H1 (cell line): ENCODE measurements at regions of chr1 and their contacts with region 1.

Region 1: DNA sequence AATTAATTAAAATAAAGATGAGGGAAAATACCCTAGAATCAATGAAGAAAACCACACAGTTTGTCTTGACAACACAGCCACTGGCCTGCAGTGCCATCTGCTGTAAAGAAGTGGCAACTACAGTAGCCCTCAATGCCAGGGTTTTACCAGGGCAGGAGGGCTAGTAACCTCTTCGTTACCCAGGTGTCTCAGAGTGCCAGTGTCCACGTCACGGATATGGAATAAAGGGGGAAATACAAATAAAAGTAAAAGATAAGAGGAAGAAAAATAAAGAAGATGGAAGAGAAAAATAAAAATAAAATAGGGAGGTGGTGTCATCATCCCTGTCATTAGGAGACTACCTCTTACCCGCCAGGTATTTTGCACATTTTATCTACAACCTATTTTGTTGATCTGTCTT is 14.2 kb upstream of the SLC44A3 start:
- DNase-seq: peak in 1 of 2 experiments; percentile 75
- H3K4me3 ChIP-seq: no peak overlapping the region
- H3K27ac ChIP-seq: no peak overlapping the region
- H3K4me1 ChIP-seq: peaks cover 0 to 10% (median 3%) of the 10 kb centered on the region in 4 experiments; a peak in 4 of 7 replicates
- H3K27me3 ChIP-seq: no peaks in the 10 kb centered on the region
- CTCF ChIP-seq: peak; percentile 76 to 88 (median 84)
- EP300 ChIP-seq: no peak
- POLR2A ChIP-seq: no peak
- RAD21 ChIP-seq: peak; percentile 98 to 99

Region 2: GRCh38 chr1:94471271-94471670 is 334.6 kb before region 1 on chr1:
- CTCF ChIA-PET with region 1: interaction called, 13 read pairs
- POLR2A ChIA-PET with region 1: no interaction called
- DNase-seq: no peak
- H3K4me3 ChIP-seq: no peak overlapping the region
- H3K27ac ChIP-seq: no peak overlapping the region
- H3K4me1 ChIP-seq: peaks cover 0 to 2% (median 0%) of the 10 kb centered on the region in 4 experiments; a peak in 1 of 7 replicates
- H3K27me3 ChIP-seq: no peaks in the 10 kb centered on the region
- CTCF ChIP-seq: no peak
- EP300 ChIP-seq: no peak
- POLR2A ChIP-seq: no peak
- RAD21 ChIP-seq: no peak

Region 3: GRCh38 chr1:94486990-94487389 is 318.9 kb before region 1 on chr1:
- CTCF ChIA-PET with region 1: interaction called, 29 read pairs
- POLR2A ChIA-PET with region 1: no interaction called
- DNase-seq: no peak
- H3K4me3 ChIP-seq: no peak overlapping the region
- H3K27ac ChIP-seq: no peak overlapping the region
- H3K4me1 ChIP-seq: no peaks in the 10 kb centered on the region
- H3K27me3 ChIP-seq: no peaks in the 10 kb centered on the region
- CTCF ChIP-seq: no peak
- EP300 ChIP-seq: no peak
- POLR2A ChIP-seq: no peak
- RAD21 ChIP-seq: no peak

Region 4: GRCh38 chr1:94522304-94522703 is 283.6 kb before region 1 on chr1:
- CTCF ChIA-PET with region 1: interaction called, 212 read pairs
- POLR2A ChIA-PET with region 1: interaction called, 3 read pairs
- DNase-seq: no peak
- H3K4me3 ChIP-seq: no peak overlapping the region
- H3K27ac ChIP-seq: no peak overlapping the region
- H3K4me1 ChIP-seq: peaks cover 0 to 2% (median 0%) of the 10 kb centered on the region in 4 experiments; a peak in 1 of 7 replicates
- H3K27me3 ChIP-seq: no peaks in the 10 kb centered on the region
- CTCF ChIP-seq: peak in 2 of 3 experiments; percentile 45 to 50; a peak in 2 of 4 replicates
- EP300 ChIP-seq: no peak
- POLR2A ChIP-seq: no peak
- RAD21 ChIP-seq: peak; percentile 84 to 85

Region 5: DNA sequence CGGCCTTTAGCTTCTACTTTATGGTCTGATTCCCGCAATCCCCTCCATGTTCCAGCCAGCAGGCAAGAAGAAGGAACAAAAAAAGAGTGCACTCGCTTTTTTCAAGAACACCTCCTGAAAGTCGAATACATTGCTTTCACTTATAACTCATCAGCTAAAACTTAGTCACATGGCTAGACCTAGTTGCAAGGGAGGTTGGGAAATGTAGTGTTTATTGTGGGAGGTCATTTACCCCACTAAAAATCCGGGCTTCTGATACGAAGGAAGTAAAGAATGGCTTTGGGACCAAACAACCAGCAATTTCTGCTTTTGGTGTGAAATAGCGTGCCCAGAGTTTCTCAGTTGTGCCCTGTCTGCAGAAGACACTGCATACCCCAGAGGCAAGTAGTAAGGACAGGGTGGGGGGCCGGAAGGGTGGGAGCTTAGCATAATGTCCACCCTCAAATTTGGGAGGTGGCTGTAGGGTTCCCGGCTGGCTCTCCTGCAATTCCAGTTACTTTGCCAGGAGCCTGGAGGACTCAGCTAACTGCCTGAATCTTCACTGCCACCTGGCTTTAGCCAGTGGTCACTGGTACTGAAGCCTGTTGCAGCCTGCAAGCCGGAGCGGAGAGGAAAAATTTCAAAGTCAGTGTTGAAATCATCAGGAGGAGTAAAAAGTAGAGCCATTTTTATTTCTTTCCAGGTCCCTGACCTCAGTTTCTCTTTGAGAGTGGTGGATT is 206.7 kb before region 1 on chr1:
- CTCF ChIA-PET with region 1: interaction called, 148 read pairs
- POLR2A ChIA-PET with region 1: no interaction called
- DNase-seq: peak in 1 of 2 experiments; percentile 54
- H3K4me3 ChIP-seq: no peak overlapping the region
- H3K27ac ChIP-seq: no peak overlapping the region
- H3K4me1 ChIP-seq: no peaks in the 10 kb centered on the region
- H3K27me3 ChIP-seq: no peaks in the 10 kb centered on the region; a peak in 1 of 7 replicates
- CTCF ChIP-seq: peak; percentile 67 to 78 (median 69)
- EP300 ChIP-seq: no peak
- POLR2A ChIP-seq: no peak
- RAD21 ChIP-seq: peak; percentile 79 to 84

Region 6: DNA sequence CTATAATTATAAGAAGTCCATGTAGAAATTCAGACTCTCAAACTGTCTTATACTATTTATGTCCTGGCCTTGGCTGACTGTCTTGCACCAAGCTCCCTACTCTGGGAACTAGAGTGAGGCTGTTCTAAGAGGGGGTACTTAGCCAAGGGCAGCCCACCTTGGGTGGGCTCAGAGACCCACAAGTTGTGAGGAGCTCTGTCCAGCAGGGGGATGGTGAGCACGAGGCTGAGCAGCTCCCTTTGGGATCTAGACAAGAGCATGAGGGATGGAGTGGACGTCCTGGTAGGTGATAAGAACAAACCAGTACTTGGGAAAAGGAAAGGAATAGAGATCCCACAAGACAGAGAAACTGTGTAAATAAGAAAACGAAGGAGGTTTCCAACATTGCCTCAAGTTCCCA is 112.9 kb before region 1 on chr1:
- CTCF ChIA-PET with region 1: interaction called, 16 read pairs
- POLR2A ChIA-PET with region 1: no interaction called
- DNase-seq: peak in 1 of 2 experiments; percentile 59
- H3K4me3 ChIP-seq: no peak overlapping the region
- H3K27ac ChIP-seq: no peak overlapping the region
- H3K4me1 ChIP-seq: peaks cover 0 to 21% (median 6%) of the 10 kb centered on the region in 4 experiments; a peak in 6 of 7 replicates
- H3K27me3 ChIP-seq: no peaks in the 10 kb centered on the region
- CTCF ChIP-seq: peak; percentile 62 to 77 (median 75)
- EP300 ChIP-seq: no peak
- POLR2A ChIP-seq: no peak
- RAD21 ChIP-seq: peak; percentile 51 to 69

Region 7: DNA sequence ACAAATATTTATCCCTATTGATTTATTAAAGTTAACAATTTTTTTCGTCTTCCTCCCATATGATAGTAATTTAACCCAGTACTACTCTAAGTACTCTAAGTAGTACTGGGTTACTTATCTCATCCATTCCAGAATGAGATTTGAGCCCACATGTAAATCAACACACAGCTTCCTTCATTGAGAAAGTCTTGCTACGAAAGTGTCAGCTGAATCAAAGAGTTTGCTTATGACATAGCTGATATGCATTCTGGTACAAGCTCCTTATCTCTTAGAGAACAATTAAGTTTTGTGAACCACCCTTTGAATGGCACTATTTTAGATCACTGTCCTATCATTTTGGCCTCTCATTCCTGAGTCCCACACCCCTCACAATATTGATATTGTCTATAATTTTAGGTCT is 11.8 kb after region 1 on chr1:
- CTCF ChIA-PET with region 1: interaction called, 20 read pairs
- POLR2A ChIA-PET with region 1: no interaction called
- DNase-seq: no peak
- H3K4me3 ChIP-seq: no peak overlapping the region
- H3K27ac ChIP-seq: no peak overlapping the region
- H3K4me1 ChIP-seq: peaks cover 2 to 9% (median 6%) of the 10 kb centered on the region in 4 experiments; a peak in 6 of 7 replicates
- H3K27me3 ChIP-seq: peaks cover 0 to 6% (median 2%) of the 10 kb centered on the region in 4 experiments; a peak in 1 of 7 replicates
- CTCF ChIP-seq: no peak
- EP300 ChIP-seq: no peak
- POLR2A ChIP-seq: no peak
- RAD21 ChIP-seq: no peak

Region 8: DNA sequence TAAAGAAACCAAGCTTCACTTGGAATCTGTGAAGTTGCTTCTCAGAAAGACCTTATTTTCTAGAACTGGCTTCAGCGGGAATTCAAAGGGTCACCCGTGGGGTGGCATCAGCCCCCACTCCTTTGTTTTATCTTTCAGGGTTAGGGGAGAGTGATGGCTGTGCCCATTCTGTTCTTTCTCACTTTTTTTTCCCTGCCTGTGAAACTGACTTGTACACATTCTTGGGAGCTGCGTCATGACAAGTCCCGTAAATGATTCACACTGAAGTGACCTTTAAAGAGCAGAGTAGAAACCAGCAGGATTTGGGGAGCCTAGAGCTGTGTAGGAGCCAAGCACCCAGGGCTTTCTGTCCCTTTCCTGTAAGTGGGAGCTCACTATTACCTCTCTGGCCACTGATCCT is 58.0 kb after region 1 on chr1:
- CTCF ChIA-PET with region 1: no interaction called
- POLR2A ChIA-PET with region 1: no interaction called
- DNase-seq: no peak
- H3K4me3 ChIP-seq: no peak overlapping the region
- H3K27ac ChIP-seq: no peak overlapping the region
- H3K4me1 ChIP-seq: peaks cover 2 to 37% (median 30%) of the 10 kb centered on the region in 4 experiments
- H3K27me3 ChIP-seq: no peaks in the 10 kb centered on the region
- CTCF ChIP-seq: no peak
- EP300 ChIP-seq: no peak
- POLR2A ChIP-seq: no peak
- RAD21 ChIP-seq: no peak